ENCODE measurements at regions of chr20 and their contacts with region 1.

Region 1: DNA sequence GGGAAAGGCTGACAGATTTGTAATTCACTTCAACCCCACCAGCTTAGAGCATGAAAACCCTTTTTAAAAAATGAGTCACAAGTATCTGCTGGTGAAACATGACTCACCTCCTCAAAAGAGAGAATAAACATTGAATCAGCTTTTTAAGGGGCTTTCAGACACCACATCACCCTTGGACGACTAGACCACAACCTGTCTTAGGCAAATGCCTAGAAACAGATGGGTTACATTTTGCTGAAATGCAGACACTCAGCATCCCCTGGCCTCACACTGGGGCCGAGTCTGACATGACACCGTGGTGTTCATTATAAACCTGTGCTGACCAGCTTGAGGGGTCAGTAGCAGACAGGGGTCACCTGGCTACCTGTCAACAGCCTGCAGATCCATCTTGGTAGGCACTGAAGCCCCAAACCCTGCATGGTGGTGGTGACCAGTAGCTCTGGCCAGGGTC is 175.3 kb upstream of the CST7 start:
- DNase-seq: peak in 2 of 10 donors; percentile 8 to 20
- H3K4me3 ChIP-seq: no peak overlapping the region
- H3K27ac ChIP-seq: peak overlapping the region in 8 of 59 donors; percentile 2 to 76 (median 53)
- H3K27me3 ChIP-seq: no peaks in the 10 kb centered on the region
- CTCF ChIP-seq: no peak

Region 2: GRCh38 chr20:24634855-24635254 is 138.9 kb before region 1 on chr20:
- intact Hi-C with region 1: loop called in 1 of 2 experiments (anchors 10 kb)
- DNase-seq: peak; percentile 37 to 91 (median 80)
- H3K4me3 ChIP-seq: peak overlapping the region in 2 of 59 donors; percentile 3 to 10
- H3K27ac ChIP-seq: peak overlapping the region in 47 of 59 donors; percentile 0 to 78 (median 50)
- H3K27me3 ChIP-seq: no peaks in the 10 kb centered on the region
- CTCF ChIP-seq: peak in 2 of 56 donors; percentile 9 to 20

Region 3: DNA sequence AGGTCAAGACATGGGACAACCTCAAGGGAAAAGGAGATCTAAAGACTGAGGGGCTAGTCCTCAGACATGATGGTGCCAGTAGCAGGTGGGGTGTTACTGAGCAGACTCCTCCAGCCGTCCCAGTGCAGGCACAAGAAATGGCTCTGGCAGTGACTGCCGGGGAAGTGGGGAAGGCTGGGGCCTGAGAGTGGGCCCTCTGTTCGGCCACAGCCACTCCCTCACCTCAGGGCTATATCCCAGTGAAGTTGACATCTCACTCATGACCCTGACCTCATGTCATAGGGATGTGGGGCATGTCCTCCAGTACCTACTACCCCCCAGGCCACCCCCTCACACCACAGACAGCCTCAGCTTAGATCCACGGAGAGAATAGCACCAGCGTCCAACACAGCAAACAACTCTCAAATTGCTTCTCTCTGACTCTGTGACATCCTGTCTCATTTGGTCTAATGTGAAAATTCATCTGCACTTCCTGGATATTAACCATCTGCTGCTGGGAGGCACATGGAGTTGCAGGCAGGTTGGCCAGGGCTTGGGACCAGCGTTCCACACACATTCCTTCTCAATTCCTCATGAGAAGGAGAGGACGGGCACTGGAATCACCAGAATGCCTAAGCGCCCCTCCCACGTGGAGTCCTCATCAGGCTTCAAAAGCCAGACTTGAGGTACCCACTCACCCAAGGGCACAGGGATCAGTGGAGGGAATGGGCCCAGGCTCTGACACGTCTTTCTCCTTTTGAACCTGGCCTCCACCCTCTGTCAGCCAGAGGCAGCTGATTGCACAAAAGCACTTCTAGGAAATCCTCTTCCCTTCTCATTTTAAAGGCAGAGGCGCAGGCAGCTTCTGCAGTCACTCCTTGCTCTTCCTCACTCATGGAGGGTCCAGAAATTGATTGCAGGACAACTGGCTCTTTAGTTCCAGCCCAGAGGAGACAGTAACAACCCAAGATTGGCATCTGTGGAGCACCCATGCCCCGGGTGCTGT is 11.7 kb after region 1 on chr20:
- intact Hi-C with region 1: no loop called
- DNase-seq: peak in 2 of 10 donors; percentile 29 to 32
- H3K4me3 ChIP-seq: no peak overlapping the region
- H3K27ac ChIP-seq: peak overlapping the region in 4 of 59 donors; percentile 2 to 46 (median 24)
- H3K27me3 ChIP-seq: peaks cover 0 to 5% (median 0%) of the 10 kb centered on the region in 45 donors
- CTCF ChIP-seq: no peak